ENCODE measurements at regions of chr19 and their contacts with region 1.

Region 1: DNA sequence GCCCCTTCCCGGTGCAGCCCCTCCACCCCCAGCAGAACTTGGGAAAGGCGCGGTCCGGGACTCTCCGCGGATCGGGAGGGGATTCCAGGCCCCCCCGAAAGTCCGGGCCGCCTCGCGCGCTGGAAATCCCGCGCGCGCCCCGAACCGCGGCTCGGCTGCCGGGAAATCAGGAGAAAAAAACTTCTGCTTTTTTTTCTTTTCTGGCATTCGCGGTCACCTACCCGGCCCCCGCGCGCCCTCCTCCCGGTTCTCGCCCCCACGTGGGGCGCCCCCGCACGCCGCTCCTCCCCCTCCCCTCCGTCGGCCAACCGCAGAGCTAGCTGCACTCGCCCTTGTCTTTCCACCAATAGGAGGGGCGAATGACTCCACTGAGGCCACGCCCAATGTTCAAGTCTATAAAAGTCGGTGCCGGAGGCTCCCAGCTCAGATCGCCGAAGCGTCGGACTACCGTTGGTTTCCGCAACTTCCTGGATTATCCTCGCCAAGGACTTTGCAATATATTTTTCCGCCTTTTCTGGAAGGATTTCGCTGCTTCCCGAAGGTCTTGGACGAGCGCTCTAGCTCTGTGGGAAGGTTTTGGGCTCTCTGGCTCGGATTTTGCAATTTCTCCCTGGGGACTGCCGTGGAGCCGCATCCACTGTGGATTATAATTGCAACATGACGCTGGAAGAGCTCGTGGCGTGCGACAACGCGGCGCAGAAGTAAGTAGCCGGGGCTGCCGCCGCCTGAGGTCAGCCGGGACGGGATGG is at the start of gene GADD45B:
- DNase-seq: peak; percentile 96 to 98 (median 98)
- ATAC-seq: peak; percentile 56
- H3K4me3 ChIP-seq: peak within 1 kb of the TSS; percentile 86
- H3K4me3 Mint-ChIP-seq: peak within 1 kb of the TSS; percentile 100
- H3K27ac ChIP-seq: peak within 1 kb of the TSS; percentile 37 to 80
- H3K27ac Mint-ChIP-seq: peak within 1 kb of the TSS; percentile 91
- H3K4me1 ChIP-seq: peaks cover 45% of the 10 kb centered on the region
- H3K4me1 Mint-ChIP-seq: peaks cover 25% of the 10 kb centered on the region
- H3K27me3 ChIP-seq: no peaks in the 10 kb centered on the region
- H3K27me3 Mint-ChIP-seq: peaks cover 4% of the 10 kb centered on the region
- CTCF ChIP-seq: no peak
- total RNA-seq, gene GADD45B: 284 to 285 TPM

Region 2: GRCh38 chr19:2253106-2254053 is 222.5 kb before region 1 on chr19:
- CTCF ChIA-PET with region 1: no interaction called
- POLR2A ChIA-PET with region 1: interaction called, 8 read pairs
- intact Hi-C with region 1: loop called in 1 of 2 experiments (anchors 1 kb)
- DNase-seq: peak in 10 of 14 experiments; percentile 55 to 76 (median 64)
- ATAC-seq: peak; percentile 47
- H3K4me3 ChIP-seq: peak overlapping the region; percentile 50
- H3K4me3 Mint-ChIP-seq: peak overlapping the region; percentile 80
- H3K27ac ChIP-seq: no peak overlapping the region
- H3K27ac Mint-ChIP-seq: peak overlapping the region; percentile 64
- H3K4me1 ChIP-seq: peaks cover 67% of the 10 kb centered on the region
- H3K4me1 Mint-ChIP-seq: peaks cover 17% of the 10 kb centered on the region
- H3K27me3 ChIP-seq: peaks cover 23 to 26% of the 10 kb centered on the region in 2 experiments
- H3K27me3 Mint-ChIP-seq: no peaks in the 10 kb centered on the region
- CTCF ChIP-seq: peak; percentile 70

Region 3: DNA sequence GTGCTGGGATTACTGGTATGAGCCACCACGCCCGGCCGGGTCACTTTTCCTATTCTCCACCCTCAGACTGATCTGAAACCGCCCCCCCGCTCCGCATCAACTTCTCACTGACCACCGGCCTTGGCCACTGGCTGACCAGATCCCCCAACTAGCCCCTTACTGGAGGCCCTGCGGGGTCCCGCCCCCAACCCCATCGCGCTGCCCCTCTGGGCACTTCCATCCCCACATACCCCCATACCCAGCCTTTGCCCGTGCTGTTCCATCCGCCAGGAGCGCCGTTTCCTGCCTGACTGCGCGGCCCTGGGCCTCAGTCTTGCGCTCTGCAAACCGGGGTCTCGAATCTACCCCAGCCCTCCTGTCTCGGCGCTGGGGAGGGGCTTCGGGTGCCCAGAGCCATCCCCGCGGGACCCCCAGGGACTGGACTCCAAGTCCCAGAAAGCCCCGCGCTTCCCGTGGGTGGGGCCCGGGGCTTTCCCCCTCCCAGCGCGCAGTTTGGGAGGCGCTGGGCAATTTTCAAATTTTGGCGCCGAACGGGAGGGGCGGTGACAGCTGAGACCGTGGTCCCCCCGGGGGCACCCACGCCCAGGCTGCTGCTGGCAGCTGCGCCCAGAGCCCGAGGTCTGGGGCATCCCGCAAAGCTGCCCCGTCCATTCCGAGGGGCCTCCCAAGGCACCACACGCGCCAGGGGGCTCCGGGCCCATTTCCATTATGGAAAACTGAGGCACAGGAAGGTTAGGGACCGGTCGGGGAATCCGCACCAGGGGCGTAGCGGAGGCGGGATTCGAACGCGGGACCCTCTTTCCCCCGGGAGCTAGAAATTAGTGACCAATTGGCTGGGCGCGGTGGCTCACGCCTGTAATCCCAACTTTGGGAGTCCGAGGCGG is 13.9 kb before region 1 on chr19:
- CTCF ChIA-PET with region 1: no interaction called
- POLR2A ChIA-PET with region 1: interaction called, 45 read pairs
- intact Hi-C with region 1: no loop called
- DNase-seq: peak; percentile 23 to 69 (median 42)
- ATAC-seq: peak; percentile 67
- H3K4me3 ChIP-seq: peak overlapping the region; percentile 72
- H3K4me3 Mint-ChIP-seq: peak overlapping the region; percentile 64
- H3K27ac ChIP-seq: no peak overlapping the region
- H3K27ac Mint-ChIP-seq: no peak overlapping the region
- H3K4me1 ChIP-seq: peaks cover 22% of the 10 kb centered on the region
- H3K4me1 Mint-ChIP-seq: peaks cover 2% of the 10 kb centered on the region
- H3K27me3 ChIP-seq: peaks cover 0 to 3% of the 10 kb centered on the region in 2 experiments
- H3K27me3 Mint-ChIP-seq: no peaks in the 10 kb centered on the region
- CTCF ChIP-seq: no peak

Region 4: GRCh38 chr19:2507109-2507508 is 31.2 kb after region 1 on chr19:
- CTCF ChIA-PET with region 1: interaction called, 8 read pairs
- POLR2A ChIA-PET with region 1: interaction called, 54 read pairs
- intact Hi-C with region 1: loop called in 1 of 2 experiments (anchors 1 kb)
- DNase-seq: peak in 11 of 14 experiments; percentile 12 to 74 (median 45)
- ATAC-seq: peak; percentile 59
- H3K4me3 ChIP-seq: no peak overlapping the region
- H3K4me3 Mint-ChIP-seq: no peak overlapping the region
- H3K27ac ChIP-seq: no peak overlapping the region
- H3K27ac Mint-ChIP-seq: peak overlapping the region; percentile 80
- H3K4me1 ChIP-seq: peaks cover 32% of the 10 kb centered on the region
- H3K4me1 Mint-ChIP-seq: peaks cover 21% of the 10 kb centered on the region
- H3K27me3 ChIP-seq: no peaks in the 10 kb centered on the region
- H3K27me3 Mint-ChIP-seq: no peaks in the 10 kb centered on the region
- CTCF ChIP-seq: no peak

Region 5: GRCh38 chr19:2552859-2553258 is 77.0 kb after region 1 on chr19:
- CTCF ChIA-PET with region 1: interaction called, 4 read pairs
- POLR2A ChIA-PET with region 1: interaction called, 66 read pairs
- intact Hi-C with region 1: no loop called
- DNase-seq: peak in 12 of 14 experiments; percentile 12 to 90 (median 37)
- ATAC-seq: peak; percentile 92
- H3K4me3 ChIP-seq: peak overlapping the region; percentile 19
- H3K4me3 Mint-ChIP-seq: peak overlapping the region; percentile 85
- H3K27ac ChIP-seq: peak overlapping the region; percentile 21 to 26
- H3K27ac Mint-ChIP-seq: peak overlapping the region; percentile 62
- H3K4me1 ChIP-seq: peaks cover 23% of the 10 kb centered on the region
- H3K4me1 Mint-ChIP-seq: peaks cover 13% of the 10 kb centered on the region
- H3K27me3 ChIP-seq: no peaks in the 10 kb centered on the region
- H3K27me3 Mint-ChIP-seq: no peaks in the 10 kb centered on the region
- CTCF ChIP-seq: no peak

Region 6: DNA sequence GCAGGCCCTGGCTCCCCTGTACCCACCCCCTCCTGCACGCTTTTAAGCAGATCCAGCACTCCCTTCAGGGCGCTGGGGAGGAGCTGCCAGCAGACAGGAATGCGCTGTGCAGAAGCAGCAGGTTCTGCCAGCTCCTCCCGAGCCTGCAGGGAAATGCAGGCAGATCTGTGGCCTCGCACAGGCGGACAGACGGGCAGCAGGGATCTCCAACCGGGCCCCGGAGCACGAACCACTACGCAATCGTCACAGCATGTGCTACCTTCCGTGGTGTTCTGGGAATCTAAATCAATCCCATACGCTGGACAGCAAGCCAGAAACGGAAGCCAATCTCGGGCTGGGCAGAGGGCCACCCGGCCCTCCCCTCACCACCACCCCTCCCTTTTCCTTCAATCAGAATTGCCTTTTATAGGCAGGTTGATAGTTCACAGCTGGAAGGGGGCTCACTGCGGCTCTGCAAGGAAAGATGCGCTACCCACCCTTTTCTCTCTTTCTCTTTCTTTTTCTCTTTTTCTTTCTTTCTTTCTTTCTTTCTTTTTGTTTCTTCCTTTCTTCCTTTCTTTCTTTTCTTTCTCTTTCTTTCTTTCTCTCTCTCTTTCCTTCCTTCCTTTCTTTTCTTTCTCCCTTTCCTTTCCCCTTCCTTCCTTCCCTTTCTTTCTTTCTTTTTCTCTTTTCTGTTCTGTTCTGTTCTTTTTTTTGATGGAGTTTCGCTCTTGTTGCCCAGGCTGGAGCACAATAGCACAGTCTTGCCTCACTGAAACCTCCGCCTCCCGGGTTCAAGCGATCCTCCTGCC is 126.7 kb after region 1 on chr19:
- CTCF ChIA-PET with region 1: interaction called, 7 read pairs
- POLR2A ChIA-PET with region 1: interaction called, 152 read pairs
- intact Hi-C with region 1: loop called in 1 of 2 experiments (anchors 1 kb)
- DNase-seq: no peak
- ATAC-seq: no peak
- H3K4me3 ChIP-seq: no peak overlapping the region
- H3K4me3 Mint-ChIP-seq: no peak overlapping the region
- H3K27ac ChIP-seq: no peak overlapping the region
- H3K27ac Mint-ChIP-seq: no peak overlapping the region
- H3K4me1 ChIP-seq: peaks cover 19% of the 10 kb centered on the region
- H3K4me1 Mint-ChIP-seq: peaks cover 13% of the 10 kb centered on the region
- H3K27me3 ChIP-seq: no peaks in the 10 kb centered on the region
- H3K27me3 Mint-ChIP-seq: peaks cover under 1% of the 10 kb centered on the region
- CTCF ChIP-seq: no peak

Region 7: DNA sequence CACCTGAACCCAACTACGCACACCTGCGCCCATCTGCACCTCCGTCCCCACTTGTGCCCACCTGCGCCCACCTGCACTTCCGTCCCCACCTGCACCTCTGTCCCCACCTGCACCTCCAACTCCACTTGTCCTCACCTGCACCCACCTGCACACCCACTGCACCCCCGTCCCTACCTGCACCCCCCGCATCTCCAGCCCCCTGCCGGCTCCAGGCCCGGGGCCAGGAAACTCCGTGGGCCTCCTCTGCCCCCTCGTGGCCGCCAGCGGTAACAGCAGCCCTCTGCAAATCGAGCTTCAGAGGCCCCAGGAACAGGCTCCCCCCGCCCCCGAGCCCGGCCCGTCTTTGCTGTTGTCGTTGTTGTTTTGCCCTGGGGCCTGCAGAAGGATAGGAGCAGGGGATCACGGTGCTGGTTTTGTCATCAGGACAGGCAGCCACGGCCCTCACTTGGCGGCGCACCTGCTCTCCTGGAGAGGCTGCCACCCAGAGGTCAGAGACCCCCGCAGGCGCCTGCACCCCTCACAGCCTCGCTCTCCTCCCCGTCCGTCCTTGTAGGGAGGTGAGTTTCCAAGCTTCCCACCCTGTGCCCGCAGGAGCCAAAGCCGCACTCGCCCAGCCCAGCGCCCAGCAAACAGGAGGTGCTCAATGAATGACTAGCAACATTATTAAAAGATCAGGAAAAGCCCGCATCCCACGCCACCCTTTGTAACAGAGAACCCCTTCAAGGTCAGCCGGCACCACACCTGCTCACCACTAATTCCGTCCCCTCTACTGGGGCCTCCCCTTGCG is 161.2 kb after region 1 on chr19:
- CTCF ChIA-PET with region 1: interaction called, 57 read pairs
- POLR2A ChIA-PET with region 1: interaction called, 30 read pairs
- intact Hi-C with region 1: loop called (anchors 1 kb)
- DNase-seq: peak; percentile 66 to 88 (median 73)
- ATAC-seq: peak; percentile 98
- H3K4me3 ChIP-seq: no peak overlapping the region
- H3K4me3 Mint-ChIP-seq: no peak overlapping the region
- H3K27ac ChIP-seq: no peak overlapping the region
- H3K27ac Mint-ChIP-seq: no peak overlapping the region
- H3K4me1 ChIP-seq: peaks cover 13% of the 10 kb centered on the region
- H3K4me1 Mint-ChIP-seq: peaks cover 13% of the 10 kb centered on the region
- H3K27me3 ChIP-seq: no peaks in the 10 kb centered on the region
- H3K27me3 Mint-ChIP-seq: no peaks in the 10 kb centered on the region
- CTCF ChIP-seq: peak; percentile 81

Region 8: GRCh38 chr19:2711172-2711874 is 235.4 kb after region 1 on chr19:
- CTCF ChIA-PET with region 1: no interaction called
- POLR2A ChIA-PET with region 1: no interaction called
- intact Hi-C with region 1: no loop called
- DNase-seq: peak in 1 of 14 experiments; percentile 23
- ATAC-seq: no peak
- H3K4me3 ChIP-seq: no peak overlapping the region
- H3K4me3 Mint-ChIP-seq: no peak overlapping the region
- H3K27ac ChIP-seq: no peak overlapping the region
- H3K27ac Mint-ChIP-seq: no peak overlapping the region
- H3K4me1 ChIP-seq: peaks cover 7% of the 10 kb centered on the region
- H3K4me1 Mint-ChIP-seq: peaks cover 25% of the 10 kb centered on the region
- H3K27me3 ChIP-seq: no peaks in the 10 kb centered on the region
- H3K27me3 Mint-ChIP-seq: peaks cover 5% of the 10 kb centered on the region
- CTCF ChIP-seq: no peak

Region 9: DNA sequence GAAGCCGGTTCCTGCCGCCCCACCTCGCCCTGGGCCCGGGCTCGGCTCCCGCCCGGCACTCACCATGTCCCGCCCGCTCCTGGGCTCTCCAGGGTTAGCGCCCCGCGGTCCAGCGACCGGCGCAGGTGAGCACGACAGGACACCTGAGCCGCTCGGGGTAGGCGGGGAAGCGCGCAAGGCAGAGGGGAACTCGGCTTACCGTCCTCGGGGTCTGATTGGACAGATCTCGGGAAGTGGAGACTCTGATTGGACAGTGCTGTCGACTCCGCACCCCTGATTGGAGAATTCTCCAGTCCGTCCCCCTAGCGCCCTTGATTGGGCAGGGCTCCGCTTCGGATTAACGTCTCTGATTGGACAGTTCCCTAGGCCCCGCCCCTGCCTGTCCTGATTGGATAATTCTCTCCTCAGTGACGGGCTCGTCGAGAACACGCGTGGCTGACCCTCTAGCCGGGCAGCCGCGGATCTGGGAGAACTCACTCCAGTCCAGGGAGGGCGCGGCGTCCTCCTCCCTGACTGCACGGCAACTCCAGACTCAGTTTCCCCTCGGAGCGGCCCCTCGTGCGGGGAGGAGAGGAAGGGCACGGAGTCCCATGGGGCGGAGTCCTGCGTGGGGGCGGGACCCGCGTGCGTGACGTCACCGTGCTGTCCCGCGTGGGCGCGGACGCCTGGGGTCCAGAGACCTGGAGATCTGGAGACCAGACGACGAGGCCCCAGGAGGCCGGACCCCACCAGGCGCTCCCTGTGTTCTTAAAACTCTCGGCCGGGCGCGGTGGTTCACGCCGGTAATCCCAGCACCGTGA is 469.1 kb after region 1 on chr19 and contains the start of gene ZNF77:
- CTCF ChIA-PET with region 1: no interaction called
- POLR2A ChIA-PET with region 1: no interaction called
- intact Hi-C with region 1: no loop called
- DNase-seq: peak; percentile 97 to 100 (median 99)
- ATAC-seq: peak; percentile 98
- H3K4me3 ChIP-seq: peak within 1 kb of the TSS; percentile 88
- H3K4me3 Mint-ChIP-seq: peak within 1 kb of the TSS; percentile 98
- H3K27ac ChIP-seq: peak within 1 kb of the TSS; percentile 78 to 90
- H3K27ac Mint-ChIP-seq: peak within 1 kb of the TSS; percentile 99
- H3K4me1 ChIP-seq: peaks cover 29% of the 10 kb centered on the region
- H3K4me1 Mint-ChIP-seq: peaks cover 28% of the 10 kb centered on the region
- H3K27me3 ChIP-seq: no peaks in the 10 kb centered on the region
- H3K27me3 Mint-ChIP-seq: no peaks in the 10 kb centered on the region
- CTCF ChIP-seq: no peak
- total RNA-seq, gene ZNF77: 2.0 to 2.4 TPM